Psoas muscle (tissue), 8 donors: ENCODE measurements at regions of chr17 and their contacts with region 1.

Region 1: GRCh38 chr17:10598621-10599020 is 49.2 kb upstream of the MYH2 start:
- DNase-seq: no peak
- ATAC-seq: peak; percentile 84 to 92 (median 89)
- H3K4me3 ChIP-seq: peak overlapping the region; percentile 27
- H3K27ac ChIP-seq: peak overlapping the region; percentile 87
- H3K4me1 ChIP-seq: peaks cover 21% of the 10 kb centered on the region
- H3K27me3 ChIP-seq: peaks cover 0 to 3% (median 0%) of the 10 kb centered on the region in 3 donors
- CTCF ChIP-seq: no peak

Region 2: DNA sequence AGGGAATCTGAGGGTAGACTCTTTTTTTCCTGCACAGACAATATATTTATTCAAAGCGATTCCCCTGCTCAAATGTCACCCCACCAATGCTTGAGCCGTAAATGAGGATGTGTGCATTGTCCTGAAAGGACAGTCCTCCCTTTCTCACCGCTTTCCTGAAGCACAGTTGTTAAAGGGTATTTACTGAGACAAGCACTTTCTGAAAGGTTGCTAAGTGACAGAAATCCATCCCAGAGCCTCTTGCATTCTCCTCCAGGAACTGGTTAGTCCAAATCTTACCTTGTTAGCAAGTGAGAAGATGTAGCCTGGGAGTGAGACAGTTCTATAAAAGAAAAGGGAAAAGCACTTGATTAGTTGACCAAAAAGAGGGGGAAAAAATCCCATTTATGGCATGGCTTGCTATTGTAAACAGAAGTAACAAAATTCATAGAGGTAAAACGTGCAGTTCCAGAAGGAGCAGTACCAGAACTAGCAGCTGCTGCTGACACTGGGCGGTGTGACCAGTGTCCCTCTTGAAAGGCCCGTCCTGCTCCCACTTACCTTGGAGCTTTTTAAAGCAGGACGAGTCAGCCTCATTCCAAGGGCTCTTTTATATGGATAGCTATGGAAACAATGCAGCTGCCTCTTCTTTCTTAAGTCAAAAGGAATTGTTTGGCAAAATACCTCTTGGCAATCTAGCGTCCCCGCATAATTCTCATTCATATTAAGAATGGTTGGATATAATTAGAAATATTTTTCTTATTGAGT is 49.4 kb before region 1 on chr17 and contains the start of gene MYH2:
- intact Hi-C with region 1: loop called in 1 of 2 experiments (anchors 5 kb)
- DNase-seq: no peak
- ATAC-seq: peak; percentile 67 to 80 (median 76)
- H3K4me3 ChIP-seq: peak within 1 kb of the TSS; percentile 58
- H3K27ac ChIP-seq: peak within 1 kb of the TSS; percentile 88
- H3K4me1 ChIP-seq: peaks cover 15% of the 10 kb centered on the region
- H3K27me3 ChIP-seq: no peaks in the 10 kb centered on the region
- CTCF ChIP-seq: no peak
- total RNA-seq, gene MYH2: 1,903 to 20,190 (median 5,841) TPM